ENCODE measurements at regions of chr17 and their contacts with region 1.

Region 1: DNA sequence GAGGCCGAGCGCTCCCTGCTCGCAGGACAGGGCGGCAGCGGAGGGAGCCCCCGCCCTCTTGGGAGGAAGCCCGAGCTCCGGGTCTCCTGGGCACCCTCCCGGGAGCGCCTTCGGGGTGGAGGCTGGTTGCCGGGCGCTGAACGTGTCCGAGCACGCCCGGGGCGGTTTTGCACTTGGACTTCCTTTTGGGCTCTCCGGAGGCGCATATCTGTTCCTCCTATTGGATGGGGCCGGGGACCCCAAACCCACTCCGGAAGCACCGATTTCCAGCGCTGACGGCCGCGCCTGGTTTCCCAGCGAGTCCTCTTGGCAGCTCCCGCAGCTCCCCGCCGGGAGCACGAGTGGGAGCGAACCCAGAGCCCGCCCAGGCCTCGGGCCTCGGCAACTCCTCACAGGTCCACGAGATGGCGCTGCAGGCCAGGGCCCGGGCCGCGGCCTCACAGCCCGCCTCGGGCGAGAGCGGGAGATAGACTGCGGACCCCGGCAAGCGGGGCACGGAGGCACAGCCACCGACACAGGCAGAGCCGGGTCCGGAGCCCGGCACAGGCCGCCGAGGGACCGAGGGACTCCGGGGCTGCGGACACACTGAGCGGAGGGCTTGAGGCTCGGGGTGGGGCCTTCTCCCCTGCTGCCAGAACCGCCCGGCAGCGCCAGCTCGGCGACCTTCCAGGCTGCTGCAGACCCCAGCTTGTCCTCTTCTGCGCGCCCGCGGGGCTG is 12.7 kb downstream of the TBX2 start:
- DNase-seq: peak; percentile 75
- ATAC-seq: peak; percentile 76
- H3K4me3 Mint-ChIP-seq: peak overlapping the region; percentile 60
- H3K27ac Mint-ChIP-seq: no peak overlapping the region
- H3K4me1 Mint-ChIP-seq: peaks cover 21% of the 10 kb centered on the region
- H3K27me3 Mint-ChIP-seq: peaks cover 45% of the 10 kb centered on the region

Region 2: DNA sequence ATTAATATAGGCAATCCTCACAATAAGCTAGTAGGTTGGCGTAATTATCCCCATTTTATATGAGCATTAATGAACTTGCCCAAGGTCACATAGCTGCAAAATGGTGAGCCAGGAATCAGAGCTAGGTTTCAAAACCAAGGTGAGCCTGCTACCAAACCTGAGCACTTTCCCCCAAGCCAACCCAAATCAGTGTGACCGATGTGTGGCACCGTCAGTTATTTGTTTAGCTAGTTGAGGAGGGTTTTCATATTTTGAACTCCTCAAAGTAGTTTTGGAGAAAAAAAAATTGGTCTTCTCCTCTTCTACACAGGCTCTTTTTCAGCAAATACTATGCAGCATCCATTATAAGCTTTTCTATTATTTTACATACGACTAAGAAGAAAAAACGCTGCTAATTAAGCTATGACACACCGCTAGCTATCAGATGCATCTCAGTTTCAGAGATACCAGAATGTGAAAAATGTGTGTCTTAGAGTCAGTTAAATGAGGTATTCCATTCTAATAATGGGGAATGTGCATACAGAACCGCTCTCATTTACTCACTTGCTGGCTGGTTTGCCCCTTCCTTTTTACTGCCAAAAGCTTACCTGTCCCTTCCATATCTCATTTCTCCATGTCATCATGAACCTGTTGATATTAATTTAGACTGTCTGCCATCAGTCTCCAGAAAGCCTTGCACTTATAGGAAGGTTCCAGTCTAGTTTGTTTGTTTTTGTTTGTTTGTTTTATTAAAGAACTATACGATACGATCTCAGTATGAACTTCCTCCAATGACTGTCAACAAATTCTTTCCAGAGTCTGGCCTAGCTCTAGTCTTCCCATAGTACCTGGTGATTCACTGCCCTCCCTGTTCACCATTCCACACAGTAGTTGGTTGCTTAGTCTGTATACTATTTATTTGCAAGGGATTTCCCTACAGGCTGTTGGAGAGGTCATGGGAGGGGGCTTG is 37.7 kb after region 1 on chr17:
- CTCF ChIA-PET with region 1: interaction called, 12 read pairs
- POLR2A ChIA-PET with region 1: no interaction called
- DNase-seq: no peak
- ATAC-seq: no peak
- H3K4me3 Mint-ChIP-seq: no peak overlapping the region
- H3K27ac Mint-ChIP-seq: no peak overlapping the region
- H3K4me1 Mint-ChIP-seq: peaks cover 13% of the 10 kb centered on the region
- H3K27me3 Mint-ChIP-seq: peaks cover 50% of the 10 kb centered on the region

Region 3: GRCh38 chr17:61583242-61583641 is 170.9 kb after region 1 on chr17:
- CTCF ChIA-PET with region 1: interaction called, 18 read pairs
- POLR2A ChIA-PET with region 1: no interaction called
- DNase-seq: no peak
- ATAC-seq: no peak
- H3K4me3 Mint-ChIP-seq: no peak overlapping the region
- H3K27ac Mint-ChIP-seq: no peak overlapping the region
- H3K4me1 Mint-ChIP-seq: no peaks in the 10 kb centered on the region
- H3K27me3 Mint-ChIP-seq: peaks cover 31% of the 10 kb centered on the region

Measured in activated CD8-positive, alpha-beta T cell treated with anti-CD3 and anti-CD28 coated beads, Interleukin-2, amount 10 ng/mL, durations not matched to agents 7 days and 5 days (primary cell).